HCT116 (cell line): ENCODE measurements at regions of chrX and their contacts with region 1.

Region 1: GRCh38 chrX:151287954-151288353 is 109.1 kb upstream of the VMA21 start:
- DNase-seq: no peak
- ATAC-seq: no peak
- H3K4me3 ChIP-seq: no peak overlapping the region
- H3K27ac ChIP-seq: no peak overlapping the region
- H3K4me1 ChIP-seq: no peaks in the 10 kb centered on the region
- H3K27me3 ChIP-seq: no peaks in the 10 kb centered on the region
- CTCF ChIP-seq: no peak
- POLR2A ChIP-seq: no peak
- RAD21 ChIP-seq: no peak

Region 2: DNA sequence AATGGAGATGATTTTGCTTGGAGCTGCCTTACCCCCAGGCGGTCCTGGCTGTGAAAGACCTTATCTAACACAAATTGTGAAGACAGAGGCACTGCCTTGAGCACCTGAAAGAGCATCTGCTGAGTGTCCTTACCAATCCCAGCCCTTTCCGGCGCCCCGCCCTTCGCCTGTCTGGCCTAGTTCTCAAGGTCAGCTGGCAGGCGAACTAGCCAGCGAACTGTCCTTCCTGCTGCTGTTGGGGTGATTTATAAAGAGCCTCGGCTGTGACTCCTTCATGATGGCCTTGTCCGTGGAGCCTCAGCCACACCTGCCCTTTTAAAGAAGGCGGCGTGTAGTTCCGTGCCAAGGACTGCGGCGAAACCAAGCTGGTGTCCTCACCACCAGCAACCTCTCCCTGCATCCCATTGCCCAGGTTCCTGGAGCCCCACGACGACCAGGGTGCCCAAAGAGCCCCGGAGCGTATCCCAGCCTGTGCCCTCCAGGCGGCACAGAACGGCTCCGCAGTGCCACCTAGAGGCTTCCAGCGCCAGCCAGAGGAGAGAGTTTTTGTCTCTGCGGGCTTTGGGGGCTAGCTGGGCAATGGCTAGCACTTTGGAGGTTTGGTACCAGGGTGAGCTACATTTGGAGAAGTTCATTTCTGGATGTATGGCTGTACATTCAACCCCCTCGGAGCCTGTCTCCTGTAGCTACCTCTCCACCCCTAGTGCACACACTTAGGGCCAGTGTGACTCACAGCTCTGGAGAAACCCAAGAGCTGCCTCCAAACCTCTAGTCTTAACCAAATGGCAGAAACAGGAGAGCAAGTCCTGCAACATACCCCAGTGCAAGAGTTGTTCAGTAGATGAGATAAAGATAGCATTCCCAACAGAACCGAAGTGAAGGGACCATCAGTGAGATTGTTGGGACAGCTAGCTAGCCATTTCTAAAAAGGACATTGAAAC is 72.2 kb after region 1 on chrX:
- CTCF ChIA-PET with region 1: no interaction called
- POLR2A ChIA-PET with region 1: no interaction called
- RAD21 ChIA-PET with region 1: no interaction called
- intact Hi-C with region 1: loop called (anchors 10 kb)
- DNase-seq: no peak
- ATAC-seq: peak; percentile 96
- H3K4me3 ChIP-seq: no peak overlapping the region
- H3K27ac ChIP-seq: no peak overlapping the region
- H3K4me1 ChIP-seq: no peaks in the 10 kb centered on the region
- H3K27me3 ChIP-seq: peaks cover 8% of the 10 kb centered on the region; the same call in 1 of the 2 replicates
- CTCF ChIP-seq: peak; percentile 34 to 75 (median 67); a peak in 5 of 6 replicates
- POLR2A ChIP-seq: no peak
- RAD21 ChIP-seq: peak; percentile 57